Activated CD4-positive, alpha-beta T cell treated with anti-CD3 and anti-CD28 coated beads, Interleukin-2, amount 10 ng/mL, durations not matched to agents 7 days and 5 days (primary cell): ENCODE measurements at regions of chr19 and their contacts with region 1.

Region 1: DNA sequence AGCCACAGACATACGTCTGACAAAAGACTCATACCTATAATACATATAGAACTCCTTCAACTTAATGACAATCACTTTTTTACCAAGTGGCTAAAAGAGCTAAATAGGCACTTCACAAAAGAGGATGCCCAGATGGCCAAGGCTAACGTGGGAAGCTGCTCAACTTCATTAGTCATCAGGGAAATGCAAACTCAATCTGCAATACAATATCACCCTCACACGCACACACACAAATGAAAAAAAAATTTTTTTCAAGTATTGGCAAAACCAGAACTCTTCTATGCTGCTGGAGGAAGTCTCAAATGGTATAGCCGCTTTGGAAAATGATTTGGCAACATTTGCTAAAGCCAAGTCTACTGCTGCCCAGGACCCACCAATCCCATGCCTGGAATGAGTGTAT is 14.6 kb upstream of the DNMT1 start:
- DNase-seq: no peak
- H3K4me3 Mint-ChIP-seq: no peak overlapping the region
- H3K27ac Mint-ChIP-seq: no peak overlapping the region
- H3K4me1 Mint-ChIP-seq: no peaks in the 10 kb centered on the region
- H3K27me3 Mint-ChIP-seq: peaks cover 3% of the 10 kb centered on the region

Region 2: GRCh38 chr19:10222201-10222890 is 13.0 kb after region 1 on chr19:
- CTCF ChIA-PET with region 1: interaction called, 10 read pairs
- POLR2A ChIA-PET with region 1: no interaction called
- DNase-seq: no peak
- H3K4me3 Mint-ChIP-seq: no peak overlapping the region
- H3K27ac Mint-ChIP-seq: no peak overlapping the region
- H3K4me1 Mint-ChIP-seq: peaks cover 3% of the 10 kb centered on the region
- H3K27me3 Mint-ChIP-seq: no peaks in the 10 kb centered on the region

Region 3: DNA sequence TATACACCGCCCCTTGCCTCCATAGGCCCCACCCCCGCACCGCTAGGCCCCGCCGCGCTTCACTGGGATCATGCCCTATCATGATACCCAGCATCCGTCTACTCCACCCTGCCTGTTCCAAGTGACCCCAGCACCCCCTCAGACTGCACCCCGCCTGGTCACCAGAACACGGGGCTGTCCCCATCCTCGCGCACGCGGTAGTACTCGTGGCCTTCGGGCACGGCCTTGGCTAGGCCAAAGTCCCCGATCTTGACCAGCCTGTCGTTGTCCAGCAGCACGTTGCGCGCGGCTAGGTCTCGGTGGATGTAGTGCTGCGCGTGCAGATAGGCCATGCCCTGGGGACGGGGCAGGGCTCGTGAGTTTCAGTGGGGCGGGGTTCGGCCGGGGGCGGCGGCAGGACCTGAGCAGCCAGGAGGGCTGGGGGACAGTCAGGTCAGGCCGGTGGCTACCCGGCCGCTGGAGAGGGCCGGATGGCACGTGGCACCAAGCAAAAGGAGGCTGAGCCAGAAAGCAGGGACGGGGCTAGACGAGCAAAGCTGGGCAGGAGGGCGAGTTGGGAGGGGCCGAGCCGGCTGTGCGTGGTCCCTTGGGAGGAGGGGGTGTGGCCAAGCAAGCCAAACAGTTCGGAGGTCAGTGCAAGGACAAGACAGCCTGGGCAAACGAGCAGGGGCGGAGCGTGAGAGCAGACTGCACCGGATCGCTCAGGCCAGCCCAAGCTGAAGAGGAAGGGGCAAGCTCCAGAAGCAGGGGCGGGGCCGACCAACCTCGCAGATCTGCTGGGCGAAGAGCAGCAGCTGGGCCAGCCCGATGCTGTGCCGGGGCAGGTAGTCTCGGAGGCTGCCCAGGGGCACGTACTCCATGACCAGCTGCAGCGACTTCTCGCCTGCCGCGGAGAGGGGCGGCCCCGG is 143.7 kb after region 1 on chr19:
- CTCF ChIA-PET with region 1: no interaction called
- POLR2A ChIA-PET with region 1: no interaction called
- DNase-seq: no peak
- H3K4me3 Mint-ChIP-seq: no peak overlapping the region
- H3K27ac Mint-ChIP-seq: no peak overlapping the region
- H3K4me1 Mint-ChIP-seq: no peaks in the 10 kb centered on the region
- H3K27me3 Mint-ChIP-seq: no peaks in the 10 kb centered on the region